ENCODE measurements at regions of chr19 and their contacts with region 1.

Region 1: DNA sequence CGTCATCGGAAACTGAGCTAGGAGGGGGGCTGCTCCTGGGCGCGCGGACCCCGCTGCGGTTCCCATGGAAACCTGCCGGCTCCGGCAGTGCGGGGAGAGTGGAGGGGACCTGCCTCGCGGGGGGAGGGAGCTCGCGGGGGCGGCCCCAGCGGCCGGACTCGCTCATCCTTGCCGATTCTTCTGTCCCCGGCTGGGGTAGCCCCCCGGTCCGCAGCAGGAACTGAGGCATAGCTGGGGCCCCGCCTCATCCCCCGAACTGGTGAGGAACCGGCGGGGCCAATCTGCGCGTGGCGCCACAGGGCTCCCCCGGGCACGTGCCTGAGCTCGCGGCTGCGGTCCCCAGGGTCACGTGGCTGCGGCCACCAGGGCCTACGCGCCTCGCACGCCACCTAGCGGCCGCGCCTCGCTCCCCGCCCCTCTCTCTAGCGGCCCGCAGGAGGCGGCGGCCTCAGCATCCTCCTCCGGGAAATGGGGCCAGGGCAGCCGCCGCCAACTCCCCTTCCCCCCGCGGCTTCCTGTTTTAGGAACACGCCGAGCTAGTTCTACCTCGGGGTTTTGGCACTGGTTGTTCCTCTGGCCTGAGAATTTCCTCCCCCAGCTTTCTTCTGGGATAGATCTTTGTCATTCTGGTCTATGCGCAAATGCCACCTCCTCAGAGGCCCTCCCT is 1.7 kb upstream of the ELAVL3 start:
- DNase-seq: peak; percentile 94
- ATAC-seq: peak; percentile 59
- H3K4me3 Mint-ChIP-seq: peak overlapping the region; percentile 70
- H3K27ac Mint-ChIP-seq: peak overlapping the region; percentile 83
- H3K4me1 Mint-ChIP-seq: peaks cover 18% of the 10 kb centered on the region
- H3K27me3 Mint-ChIP-seq: peaks cover 21% of the 10 kb centered on the region
- CTCF ChIP-seq: peak; percentile 93

Region 2: DNA sequence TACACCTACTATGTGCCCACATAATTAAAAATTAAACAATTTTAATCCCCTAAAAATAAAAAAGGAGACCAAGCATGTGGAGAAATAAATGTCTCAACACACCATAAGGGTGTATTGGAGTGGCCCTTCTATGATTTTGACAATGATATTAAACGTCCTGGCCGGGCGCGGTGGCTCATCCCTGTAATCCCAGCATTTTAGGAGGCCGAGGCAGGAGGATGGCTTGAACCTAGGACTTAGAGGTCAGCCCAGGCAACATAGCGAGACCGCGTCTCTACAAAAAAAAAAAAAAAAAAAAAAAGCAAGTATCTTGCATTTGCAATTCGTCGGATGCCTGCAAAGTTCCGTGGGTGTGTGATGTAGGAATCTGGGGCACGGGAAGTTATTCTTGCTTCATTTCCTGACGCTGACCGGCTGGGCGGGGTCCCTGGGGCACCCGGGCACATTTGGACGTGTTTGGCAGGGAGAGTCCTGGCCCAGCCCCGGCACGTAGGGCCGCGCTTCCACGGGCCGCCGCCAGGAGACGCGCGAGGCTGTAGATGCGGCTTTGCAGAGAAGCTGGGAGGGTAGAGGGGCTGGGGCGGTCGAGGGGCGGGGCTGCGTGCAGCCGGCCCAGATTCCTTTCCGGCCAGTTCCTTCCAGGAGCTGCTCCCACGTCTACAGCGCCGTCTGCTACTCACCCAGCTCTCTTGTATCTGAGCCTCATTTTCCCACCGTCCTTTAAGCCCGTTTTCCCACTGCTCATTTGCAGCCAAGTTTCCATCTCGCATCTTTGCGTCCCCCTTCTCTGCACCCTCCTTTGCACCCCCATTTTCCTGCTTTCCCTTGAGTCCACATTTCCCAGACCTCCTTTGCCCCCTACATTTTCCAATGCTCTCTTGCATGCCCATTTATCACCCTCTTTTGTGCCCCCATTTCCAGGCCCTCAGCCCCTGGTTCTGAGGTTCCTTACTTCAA is 188.8 kb before region 1 on chr19:
- CTCF ChIA-PET with region 1: interaction called, 12 read pairs
- POLR2A ChIA-PET with region 1: interaction called, 4 read pairs
- intact Hi-C with region 1: loop called (anchors 10 kb)
- DNase-seq: peak; percentile 91
- ATAC-seq: peak; percentile 100
- H3K4me3 Mint-ChIP-seq: peak overlapping the region; percentile 47
- H3K27ac Mint-ChIP-seq: no peak overlapping the region
- H3K4me1 Mint-ChIP-seq: peaks cover 10% of the 10 kb centered on the region
- H3K27me3 Mint-ChIP-seq: peaks cover 19% of the 10 kb centered on the region
- CTCF ChIP-seq: peak; percentile 98

Region 3: GRCh38 chr19:11374433-11375142 is 107.9 kb before region 1 on chr19 and contains the start of gene SWSAP1:
- CTCF ChIA-PET with region 1: interaction called, 29 read pairs
- POLR2A ChIA-PET with region 1: interaction called, 5 read pairs
- intact Hi-C with region 1: no loop called
- DNase-seq: peak; percentile 98
- ATAC-seq: peak; percentile 91
- H3K4me3 Mint-ChIP-seq: no peak within 1 kb of the TSS
- H3K27ac Mint-ChIP-seq: no peak within 1 kb of the TSS
- H3K4me1 Mint-ChIP-seq: peaks cover 30% of the 10 kb centered on the region
- H3K27me3 Mint-ChIP-seq: no peaks in the 10 kb centered on the region
- CTCF ChIP-seq: no peak
- total RNA-seq, gene SWSAP1: 1.5 to 1.8 TPM

Region 4: GRCh38 chr19:11495481-11495880 is 13.0 kb after region 1 on chr19:
- CTCF ChIA-PET with region 1: interaction called, 10 read pairs
- POLR2A ChIA-PET with region 1: interaction called, 4 read pairs
- intact Hi-C with region 1: no loop called
- DNase-seq: no peak
- ATAC-seq: no peak
- H3K4me3 Mint-ChIP-seq: no peak overlapping the region
- H3K27ac Mint-ChIP-seq: no peak overlapping the region
- H3K4me1 Mint-ChIP-seq: no peaks in the 10 kb centered on the region
- H3K27me3 Mint-ChIP-seq: no peaks in the 10 kb centered on the region
- CTCF ChIP-seq: no peak

Region 5: GRCh38 chr19:11549386-11549953 is 67.0 kb after region 1 on chr19:
- CTCF ChIA-PET with region 1: no interaction called
- POLR2A ChIA-PET with region 1: no interaction called
- intact Hi-C with region 1: no loop called
- DNase-seq: no peak
- ATAC-seq: no peak
- H3K4me3 Mint-ChIP-seq: no peak overlapping the region
- H3K27ac Mint-ChIP-seq: no peak overlapping the region
- H3K4me1 Mint-ChIP-seq: peaks cover 11% of the 10 kb centered on the region
- H3K27me3 Mint-ChIP-seq: no peaks in the 10 kb centered on the region
- CTCF ChIP-seq: no peak